IMR-90 (cell line): ENCODE measurements at regions of chr9 and their contacts with region 1.

Region 1: GRCh38 chr9:27529316-27530278 is at the start of gene MOB3B:
- DNase-seq: peak; percentile 50
- ATAC-seq: peak; percentile 98
- H3K4me3 ChIP-seq: peak within 1 kb of the TSS; percentile 57
- H3K27ac ChIP-seq: no peak within 1 kb of the TSS
- H3K4me1 ChIP-seq: no peaks in the 10 kb centered on the region
- H3K27me3 ChIP-seq: peaks cover 32% of the 10 kb centered on the region
- CTCF ChIP-seq: peak; percentile 82
- POLR2A ChIP-seq: no peak
- RAD21 ChIP-seq: peak; percentile 54
- total RNA-seq, gene MOB3B: under 0.01 TPM in 2 replicates

Region 2: GRCh38 chr9:27333241-27334052 is 196.2 kb before region 1 on chr9:
- CTCF ChIA-PET with region 1: interaction called, 3 read pairs
- POLR2A ChIA-PET with region 1: no interaction called
- dilution Hi-C with region 1: no loop called
- in situ Hi-C with region 1: loop called (anchors 5 kb)
- intact Hi-C with region 1: loop called (anchors 1 kb)
- DNase-seq: peak; percentile 73
- ATAC-seq: peak; percentile 95
- H3K4me3 ChIP-seq: no peak overlapping the region
- H3K27ac ChIP-seq: no peak overlapping the region
- H3K4me1 ChIP-seq: no peaks in the 10 kb centered on the region; the same call in 1 of the 2 replicates
- H3K27me3 ChIP-seq: peaks cover 29% of the 10 kb centered on the region
- CTCF ChIP-seq: peak; percentile 89
- POLR2A ChIP-seq: no peak
- RAD21 ChIP-seq: peak; percentile 78

Region 3: GRCh38 chr9:27539479-27540441 is 10.2 kb after region 1 on chr9:
- CTCF ChIA-PET with region 1: interaction called, 16 read pairs
- POLR2A ChIA-PET with region 1: no interaction called
- dilution Hi-C with region 1: no loop called
- in situ Hi-C with region 1: no loop called
- intact Hi-C with region 1: no loop called
- DNase-seq: peak; percentile 87
- ATAC-seq: peak; percentile 83
- H3K4me3 ChIP-seq: no peak overlapping the region
- H3K27ac ChIP-seq: peak overlapping the region; percentile 60; the same call in 1 of the 2 replicates
- H3K4me1 ChIP-seq: peaks cover 11% of the 10 kb centered on the region
- H3K27me3 ChIP-seq: no peaks in the 10 kb centered on the region
- CTCF ChIP-seq: no peak
- POLR2A ChIP-seq: no peak
- RAD21 ChIP-seq: no peak